ENCODE measurements at regions of chr13 and their contacts with region 1.

Region 1: GRCh38 chr13:60019119-60019993 is 144.4 kb downstream of the DIAPH3 start:
- DNase-seq: no peak
- H3K4me3 ChIP-seq: no peak overlapping the region
- H3K27ac ChIP-seq: no peak overlapping the region
- H3K4me1 ChIP-seq: no peaks in the 10 kb centered on the region
- H3K27me3 ChIP-seq: no peaks in the 10 kb centered on the region
- CTCF ChIP-seq: no peak
- POLR2A ChIP-seq: no peak

Region 2: GRCh38 chr13:59360108-59360507 is 659.2 kb before region 1 on chr13:
- intact Hi-C with region 1: loop called (anchors 5 kb)
- DNase-seq: no peak
- H3K4me3 ChIP-seq: no peak overlapping the region
- H3K27ac ChIP-seq: no peak overlapping the region
- H3K4me1 ChIP-seq: no peaks in the 10 kb centered on the region
- H3K27me3 ChIP-seq: no peaks in the 10 kb centered on the region
- CTCF ChIP-seq: no peak
- POLR2A ChIP-seq: no peak

Region 3: GRCh38 chr13:60772726-60773125 is 753.4 kb after region 1 on chr13:
- intact Hi-C with region 1: no loop called
- DNase-seq: no peak
- H3K4me3 ChIP-seq: no peak overlapping the region
- H3K27ac ChIP-seq: no peak overlapping the region
- H3K4me1 ChIP-seq: no peaks in the 10 kb centered on the region
- H3K27me3 ChIP-seq: no peaks in the 10 kb centered on the region
- CTCF ChIP-seq: no peak
- POLR2A ChIP-seq: no peak

Measured in breast epithelium (tissue), 4 donors.